ENCODE measurements at regions of chr12 and their contacts with region 1.

Region 1: GRCh38 chr12:53625946-53626701 is at the start of gene ATF7:
- DNase-seq: peak; percentile 98 to 99
- ATAC-seq: peak; percentile 97 to 99 (median 98)
- H3K4me3 ChIP-seq: peak within 1 kb of the TSS; percentile 57 to 74 (median 69)
- H3K27ac ChIP-seq: peak within 1 kb of the TSS; percentile 79 to 98 (median 96)
- H3K4me1 ChIP-seq: peaks cover 5 to 42% (median 36%) of the 10 kb centered on the region in 9 donors
- H3K27me3 ChIP-seq: no peaks in the 10 kb centered on the region
- CTCF ChIP-seq: peak in 2 of 9 donors; percentile 7 to 14
- total RNA-seq, gene ATF7: 28.2 to 47.8 (median 34.4) TPM

Region 2: DNA sequence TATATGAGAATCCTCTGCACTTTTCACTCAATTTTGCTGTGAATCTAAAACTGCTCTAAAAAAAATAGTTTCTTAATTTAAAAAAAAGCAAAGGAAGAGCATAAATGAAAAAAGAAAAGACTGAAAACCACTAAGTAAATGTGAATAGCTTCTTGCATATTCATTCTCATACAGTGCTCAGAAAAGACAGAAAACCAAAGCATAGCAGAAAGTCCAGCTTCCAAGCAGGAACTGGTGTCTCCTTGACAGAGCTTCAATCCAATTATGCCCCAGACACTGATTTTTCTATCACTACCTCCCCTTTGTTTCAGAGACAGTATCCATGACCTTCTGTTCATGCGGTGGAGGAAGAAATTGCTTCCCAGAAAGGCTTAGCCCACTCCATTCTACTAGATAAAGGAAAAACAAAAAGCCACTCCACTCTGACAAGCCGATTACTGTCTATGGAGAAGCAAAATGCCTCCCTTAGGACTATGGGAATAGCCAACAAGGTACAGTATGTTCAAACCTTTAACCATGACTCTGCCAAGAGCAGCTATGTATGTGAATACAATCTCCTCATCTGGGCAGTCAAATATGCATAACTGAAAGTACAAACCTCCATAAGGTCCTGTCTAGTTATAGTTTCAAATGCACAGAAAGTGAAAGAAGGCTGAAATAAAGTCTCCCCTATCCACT is 40.5 kb before region 1 on chr12:
- intact Hi-C with region 1: no loop called
- DNase-seq: no peak
- ATAC-seq: peak in 3 of 8 donors; percentile 66 to 78 (median 73)
- H3K4me3 ChIP-seq: no peak overlapping the region
- H3K27ac ChIP-seq: peak overlapping the region in 4 of 10 donors; percentile 4 to 47 (median 10)
- H3K4me1 ChIP-seq: peaks cover 0 to 45% (median 29%) of the 10 kb centered on the region in 9 donors
- H3K27me3 ChIP-seq: no peaks in the 10 kb centered on the region
- CTCF ChIP-seq: no peak

Region 3: GRCh38 chr12:53660041-53660440 is 33.9 kb after region 1 on chr12:
- intact Hi-C with region 1: loop called in 2 of 10 experiments (anchors 5 kb)
- DNase-seq: peak; percentile 32 to 76
- ATAC-seq: peak; percentile 60 to 85 (median 74)
- H3K4me3 ChIP-seq: peak overlapping the region in 6 of 10 donors; percentile 0 to 27 (median 4)
- H3K27ac ChIP-seq: peak overlapping the region; percentile 74 to 95 (median 91)
- H3K4me1 ChIP-seq: peaks cover 4 to 43% (median 34%) of the 10 kb centered on the region in 9 donors
- H3K27me3 ChIP-seq: no peaks in the 10 kb centered on the region
- CTCF ChIP-seq: no peak